Activated CD4-positive, alpha-beta T cell treated with anti-CD3 and anti-CD28 coated beads, Interleukin-2, amount 10 ng/mL, durations not matched to agents 24 days and 14 days (primary cell): ENCODE measurements at regions of chr11 and their contacts with region 1.

Region 1: GRCh38 chr11:82996966-82997606 is 74.6 kb downstream of the RAB30 start:
- DNase-seq: no peak
- H3K4me3 Mint-ChIP-seq: no peak overlapping the region
- H3K27ac Mint-ChIP-seq: peak overlapping the region; percentile 35
- H3K4me1 Mint-ChIP-seq: peaks cover 35% of the 10 kb centered on the region
- H3K27me3 Mint-ChIP-seq: no peaks in the 10 kb centered on the region

Region 2: GRCh38 chr11:82959987-82960778 is 36.9 kb before region 1 on chr11:
- intact Hi-C with region 1: loop called (anchors 1 kb)
- DNase-seq: peak; percentile 86
- H3K4me3 Mint-ChIP-seq: peak overlapping the region; percentile 62
- H3K27ac Mint-ChIP-seq: peak overlapping the region; percentile 62
- H3K4me1 Mint-ChIP-seq: peaks cover 51% of the 10 kb centered on the region
- H3K27me3 Mint-ChIP-seq: peaks cover 2% of the 10 kb centered on the region

Region 3: DNA sequence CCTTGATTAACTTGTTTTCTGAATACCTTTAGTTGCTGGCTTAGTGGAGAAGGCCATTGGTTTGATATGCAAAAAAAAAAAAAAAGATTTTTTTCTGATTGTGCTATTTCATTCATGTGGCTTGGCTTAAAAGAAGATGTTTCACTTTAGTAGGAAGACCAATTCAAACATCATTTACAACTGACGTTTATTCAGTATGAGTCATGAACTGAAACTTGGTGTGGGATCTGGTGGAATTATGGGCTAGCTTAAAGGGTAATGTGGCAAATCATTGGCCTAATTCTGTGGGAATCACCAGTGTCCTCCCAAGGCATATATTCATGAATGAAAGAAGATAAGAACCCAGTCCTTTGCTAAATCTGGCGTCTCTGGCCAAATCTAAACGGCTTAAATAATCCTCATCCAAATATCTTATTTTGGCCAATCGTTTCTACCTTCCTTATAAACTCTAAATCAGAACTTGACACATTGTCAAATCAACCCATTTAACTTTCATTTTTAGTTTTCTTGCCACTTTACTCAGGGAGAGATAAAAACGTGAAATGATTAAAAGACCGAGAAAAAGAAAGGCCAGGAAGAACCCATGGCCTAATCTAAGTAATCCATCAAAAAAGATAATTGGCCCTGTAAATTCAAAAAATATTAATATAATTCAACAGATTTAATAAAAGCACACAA is 18.5 kb before region 1 on chr11:
- intact Hi-C with region 1: loop called (anchors 1 kb)
- DNase-seq: peak; percentile 66
- H3K4me3 Mint-ChIP-seq: peak overlapping the region; percentile 30
- H3K27ac Mint-ChIP-seq: peak overlapping the region; percentile 25
- H3K4me1 Mint-ChIP-seq: peaks cover 27% of the 10 kb centered on the region
- H3K27me3 Mint-ChIP-seq: peaks cover 7% of the 10 kb centered on the region

Region 4: DNA sequence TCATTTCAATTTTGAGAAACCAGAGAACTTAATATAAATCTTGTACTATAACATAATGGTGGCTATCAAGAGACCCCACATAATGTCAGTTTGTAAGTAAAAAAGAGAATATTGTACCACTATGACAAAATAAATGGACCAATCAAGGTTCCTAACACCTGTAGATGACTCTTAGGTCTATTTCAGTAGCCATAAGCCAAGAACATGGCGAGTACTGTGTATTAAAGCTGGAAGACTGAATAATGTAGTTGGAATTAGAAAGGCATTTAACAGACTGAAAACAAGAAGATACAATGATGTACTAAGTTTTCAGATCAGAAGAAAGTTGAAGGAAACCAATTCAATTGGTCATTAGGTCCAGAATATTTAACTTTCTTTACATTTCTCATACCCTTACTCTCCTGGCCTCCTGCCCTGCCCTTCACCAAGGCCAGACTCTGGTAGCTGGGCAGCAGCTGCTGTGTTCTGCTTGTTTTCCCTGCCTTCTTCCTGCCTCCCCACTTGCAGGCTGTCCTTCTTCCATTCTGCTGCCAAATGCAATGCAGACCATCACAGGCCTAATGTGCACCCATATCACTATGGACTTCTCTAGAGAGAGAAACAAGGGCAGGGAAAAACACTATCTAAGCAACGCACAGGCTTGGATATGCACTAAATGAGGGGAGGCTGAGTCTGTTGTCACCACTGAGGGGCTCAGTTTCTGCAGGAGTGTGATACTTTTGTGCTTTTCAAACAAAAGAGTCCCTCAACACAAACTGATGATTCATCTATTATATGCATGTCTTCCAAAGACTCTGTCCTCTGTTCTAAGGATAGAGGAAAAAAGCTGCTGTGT is 14.5 kb after region 1 on chr11:
- intact Hi-C with region 1: no loop called
- DNase-seq: no peak
- H3K4me3 Mint-ChIP-seq: no peak overlapping the region
- H3K27ac Mint-ChIP-seq: no peak overlapping the region
- H3K4me1 Mint-ChIP-seq: peaks cover 29% of the 10 kb centered on the region
- H3K27me3 Mint-ChIP-seq: no peaks in the 10 kb centered on the region

Region 5: DNA sequence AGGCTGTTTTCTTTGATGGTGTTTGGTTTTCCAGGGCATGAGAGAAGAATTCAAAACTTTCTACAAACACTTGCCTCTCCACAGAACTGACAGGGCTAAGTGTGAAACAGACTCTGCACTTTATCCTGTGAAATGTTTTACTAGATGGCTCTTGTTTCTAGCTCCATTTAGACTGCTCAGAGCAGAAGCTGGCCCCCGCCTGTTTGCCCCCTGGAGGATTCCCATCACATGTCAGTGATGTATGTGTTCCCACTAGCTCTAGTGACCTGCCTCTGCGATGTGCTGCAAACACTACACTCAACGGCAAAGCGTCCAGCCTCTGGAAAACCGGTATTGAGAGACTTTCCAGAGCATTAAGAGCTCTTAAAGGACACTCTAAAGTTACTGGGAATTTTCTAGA is 118.5 kb after region 1 on chr11:
- intact Hi-C with region 1: loop called (anchors 5 kb)
- DNase-seq: no peak
- H3K4me3 Mint-ChIP-seq: peak overlapping the region; percentile 57
- H3K27ac Mint-ChIP-seq: no peak overlapping the region
- H3K4me1 Mint-ChIP-seq: peaks cover 22% of the 10 kb centered on the region
- H3K27me3 Mint-ChIP-seq: peaks cover 3% of the 10 kb centered on the region

Region 6: DNA sequence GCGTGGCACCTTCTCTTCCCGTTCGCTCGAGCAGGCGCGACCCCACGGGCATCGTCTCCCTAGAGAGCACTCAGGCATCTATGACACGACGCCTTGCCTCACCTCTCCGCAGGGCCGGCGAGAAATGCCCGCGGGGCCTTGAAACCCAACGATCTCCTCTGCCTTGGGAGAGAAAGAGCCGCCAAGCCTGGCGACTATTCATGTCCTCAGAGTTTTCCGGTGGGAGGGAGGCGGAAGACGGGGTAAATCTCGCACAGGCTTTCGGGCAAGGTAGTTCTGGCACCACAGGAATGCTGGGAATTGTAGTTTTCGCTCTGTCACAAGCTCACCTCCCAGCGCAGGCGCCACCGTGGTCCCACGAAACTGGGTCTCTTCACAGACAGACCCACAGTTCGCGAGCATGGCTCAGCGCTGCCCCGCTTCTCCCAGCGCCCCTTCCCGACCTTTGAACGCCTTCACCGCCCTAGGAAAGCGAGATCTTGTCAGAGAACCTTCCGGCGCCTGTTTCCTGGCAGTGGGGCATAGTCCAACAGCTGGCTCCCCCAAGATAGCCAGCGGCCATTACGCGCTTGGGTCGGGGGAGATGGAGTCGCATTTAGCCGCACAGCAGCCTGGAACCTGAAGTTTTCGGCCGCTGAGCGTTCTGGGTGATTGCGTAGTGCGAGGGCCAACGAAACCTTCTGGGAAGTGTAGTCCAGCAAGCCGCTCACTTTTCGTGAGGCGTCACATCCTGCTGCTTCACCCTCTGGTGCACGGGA is 288.9 kb after region 1 on chr11 and contains the start of gene CCDC90B:
- intact Hi-C with region 1: loop called (anchors 10 kb)
- DNase-seq: peak; percentile 97
- H3K4me3 Mint-ChIP-seq: peak within 1 kb of the TSS; percentile 99
- H3K27ac Mint-ChIP-seq: peak within 1 kb of the TSS; percentile 99
- H3K4me1 Mint-ChIP-seq: peaks cover 20% of the 10 kb centered on the region
- H3K27me3 Mint-ChIP-seq: peaks cover 11% of the 10 kb centered on the region
- total RNA-seq, gene CCDC90B: 24.1 and 24.7 TPM in 2 replicates